Activated CD8-positive, alpha-beta T cell treated with anti-CD3 and anti-CD28 coated beads for 36 hours (primary cell): ENCODE measurements at regions of chr5 and their contacts with region 1.

Region 1: GRCh38 chr5:32585446-32586275 is at the start of gene SUB1:
- DNase-seq: peak; percentile 96
- ATAC-seq: peak; percentile 89
- H3K4me3 Mint-ChIP-seq: peak within 1 kb of the TSS; percentile 97
- H3K27ac Mint-ChIP-seq: peak within 1 kb of the TSS; percentile 99
- H3K4me1 Mint-ChIP-seq: peaks cover 52% of the 10 kb centered on the region
- H3K27me3 Mint-ChIP-seq: peaks cover 1% of the 10 kb centered on the region
- CTCF ChIP-seq: no peak
- total RNA-seq, gene SUB1: 403 to 431 TPM

Region 2: GRCh38 chr5:32339198-32339597 is 246.5 kb before region 1 on chr5:
- CTCF ChIA-PET with region 1: no interaction called
- POLR2A ChIA-PET with region 1: no interaction called
- intact Hi-C with region 1: no loop called
- DNase-seq: no peak
- ATAC-seq: no peak
- H3K4me3 Mint-ChIP-seq: no peak overlapping the region
- H3K27ac Mint-ChIP-seq: no peak overlapping the region
- H3K4me1 Mint-ChIP-seq: no peaks in the 10 kb centered on the region
- H3K27me3 Mint-ChIP-seq: no peaks in the 10 kb centered on the region
- CTCF ChIP-seq: no peak

Region 3: DNA sequence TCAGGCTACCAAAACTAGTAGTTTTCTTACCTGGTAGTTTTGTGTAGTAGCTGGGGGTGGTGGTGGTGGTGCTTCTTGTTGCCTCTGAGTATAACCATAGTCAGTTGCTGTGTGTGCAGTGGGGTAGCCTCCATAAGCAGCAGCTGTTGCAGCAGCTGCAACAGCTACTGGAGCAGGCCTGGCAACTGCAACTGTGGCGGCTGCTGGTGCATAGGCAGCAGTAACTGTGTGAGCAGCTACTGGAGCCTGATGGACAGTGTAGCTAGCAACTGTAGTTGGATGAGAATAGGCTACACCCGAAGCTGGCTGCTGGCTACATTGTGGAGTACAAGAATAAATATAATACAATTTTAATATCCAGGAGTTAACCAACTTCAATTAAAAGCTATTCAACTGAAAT is 165.9 kb before region 1 on chr5:
- CTCF ChIA-PET with region 1: interaction called, 12 read pairs
- POLR2A ChIA-PET with region 1: no interaction called
- intact Hi-C with region 1: no loop called
- DNase-seq: no peak
- ATAC-seq: no peak
- H3K4me3 Mint-ChIP-seq: no peak overlapping the region
- H3K27ac Mint-ChIP-seq: no peak overlapping the region
- H3K4me1 Mint-ChIP-seq: peaks cover 34% of the 10 kb centered on the region
- H3K27me3 Mint-ChIP-seq: no peaks in the 10 kb centered on the region
- CTCF ChIP-seq: no peak

Region 4: GRCh38 chr5:32482193-32482592 is 103.5 kb before region 1 on chr5:
- CTCF ChIA-PET with region 1: interaction called, 182 read pairs
- POLR2A ChIA-PET with region 1: no interaction called
- intact Hi-C with region 1: no loop called
- DNase-seq: no peak
- ATAC-seq: no peak
- H3K4me3 Mint-ChIP-seq: no peak overlapping the region
- H3K27ac Mint-ChIP-seq: no peak overlapping the region
- H3K4me1 Mint-ChIP-seq: no peaks in the 10 kb centered on the region
- H3K27me3 Mint-ChIP-seq: no peaks in the 10 kb centered on the region
- CTCF ChIP-seq: no peak

Region 5: GRCh38 chr5:32498484-32498883 is 87.2 kb before region 1 on chr5:
- CTCF ChIA-PET with region 1: interaction called, 32 read pairs
- POLR2A ChIA-PET with region 1: no interaction called
- intact Hi-C with region 1: no loop called
- DNase-seq: no peak
- ATAC-seq: no peak
- H3K4me3 Mint-ChIP-seq: no peak overlapping the region
- H3K27ac Mint-ChIP-seq: no peak overlapping the region
- H3K4me1 Mint-ChIP-seq: peaks cover 4% of the 10 kb centered on the region
- H3K27me3 Mint-ChIP-seq: peaks cover 3% of the 10 kb centered on the region
- CTCF ChIP-seq: no peak

Region 6: DNA sequence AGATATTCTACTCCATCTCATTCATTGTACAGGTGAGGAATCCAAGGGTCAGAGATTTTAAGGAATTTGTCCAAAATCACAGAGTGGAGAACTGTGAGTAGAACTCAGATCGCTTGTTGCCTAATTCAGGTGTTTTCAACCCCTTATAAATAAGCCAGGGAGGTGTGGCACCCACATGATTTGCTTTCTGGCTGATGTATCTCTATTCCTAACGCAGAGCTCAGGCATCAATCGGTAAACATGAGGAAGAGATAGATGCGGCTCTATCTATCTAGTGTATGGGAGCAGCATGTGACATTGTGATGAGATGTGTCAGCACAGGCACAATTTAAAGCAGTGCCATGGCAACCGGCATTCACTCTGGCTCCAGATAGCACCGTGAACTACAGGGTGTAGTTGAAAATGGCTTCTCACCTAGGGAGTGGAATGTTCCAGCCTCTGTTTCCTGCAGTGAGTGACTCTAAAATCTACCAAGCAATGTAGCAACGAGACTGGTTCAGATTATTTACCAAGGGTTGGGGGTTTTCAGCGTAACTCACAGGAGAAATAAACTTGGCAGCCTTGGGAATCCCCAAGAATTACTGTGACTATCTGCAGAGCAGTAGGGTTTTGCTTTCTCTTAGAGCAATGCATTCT is 53.7 kb before region 1 on chr5:
- CTCF ChIA-PET with region 1: interaction called, 16 read pairs
- POLR2A ChIA-PET with region 1: interaction called, 6 read pairs
- intact Hi-C with region 1: loop called (anchors 5 kb)
- DNase-seq: peak; percentile 62
- ATAC-seq: peak; percentile 84
- H3K4me3 Mint-ChIP-seq: peak overlapping the region; percentile 61
- H3K27ac Mint-ChIP-seq: peak overlapping the region; percentile 70
- H3K4me1 Mint-ChIP-seq: peaks cover 10% of the 10 kb centered on the region
- H3K27me3 Mint-ChIP-seq: no peaks in the 10 kb centered on the region
- CTCF ChIP-seq: no peak

Region 7: DNA sequence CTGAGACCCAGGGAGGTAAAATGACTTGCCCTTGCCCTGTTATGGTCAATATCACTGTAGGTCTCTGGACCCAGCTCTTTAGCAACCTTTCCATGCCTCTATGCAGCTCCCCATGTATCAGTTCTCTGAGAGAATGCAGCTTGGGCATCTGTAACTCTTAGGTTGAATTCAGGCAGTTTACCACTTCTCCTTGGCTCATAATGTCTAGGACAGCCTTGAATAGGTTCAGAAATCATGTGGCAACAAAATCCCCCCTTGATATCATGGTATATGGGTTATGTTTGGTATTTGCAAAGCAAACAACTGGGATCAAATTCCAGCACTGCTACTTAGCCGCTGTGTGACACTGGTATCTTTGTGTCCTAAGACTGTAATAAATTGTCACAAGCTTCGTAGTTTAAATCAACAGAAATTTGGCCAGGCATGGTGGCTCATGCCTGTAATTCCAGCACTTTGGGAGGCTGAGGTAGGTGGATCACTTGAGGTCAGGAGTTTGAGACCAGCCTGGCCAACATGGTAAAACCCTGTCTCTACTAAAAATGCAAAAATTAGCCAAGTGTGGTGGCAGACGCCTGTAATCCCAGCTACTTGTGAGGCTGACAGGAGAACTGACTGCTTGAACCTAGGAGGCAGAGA is 11.0 kb before region 1 on chr5:
- CTCF ChIA-PET with region 1: interaction called, 10 read pairs
- POLR2A ChIA-PET with region 1: interaction called, 3 read pairs
- intact Hi-C with region 1: no loop called
- DNase-seq: no peak
- ATAC-seq: no peak
- H3K4me3 Mint-ChIP-seq: no peak overlapping the region
- H3K27ac Mint-ChIP-seq: no peak overlapping the region
- H3K4me1 Mint-ChIP-seq: no peaks in the 10 kb centered on the region
- H3K27me3 Mint-ChIP-seq: no peaks in the 10 kb centered on the region
- CTCF ChIP-seq: no peak